ENCODE measurements at regions of chr1 and their contacts with region 1.

Region 1: DNA sequence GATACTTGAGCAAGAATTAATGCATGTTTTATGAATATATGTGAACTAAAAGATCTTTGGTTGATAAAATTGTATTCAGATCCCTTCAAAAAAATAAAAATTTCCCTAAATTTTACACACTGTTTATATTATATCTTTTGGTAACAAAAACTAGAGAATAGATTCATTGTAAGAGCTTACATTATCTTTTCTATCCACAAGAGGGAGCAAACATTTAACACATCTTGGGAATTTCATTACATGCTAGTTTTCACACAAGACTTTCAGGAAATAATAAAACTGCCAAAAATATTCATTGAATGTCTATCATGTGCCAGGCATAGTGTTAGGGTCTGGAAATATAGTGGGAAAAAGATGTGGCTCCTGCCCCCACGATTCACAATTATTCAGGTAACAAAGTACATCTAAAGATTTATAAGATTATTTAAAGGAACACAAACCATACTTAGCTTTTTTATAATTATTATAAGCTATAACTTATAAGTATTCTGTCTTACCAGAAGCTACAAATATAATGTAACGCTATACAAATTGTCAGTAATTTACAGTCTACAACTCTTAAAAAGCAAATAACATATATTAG is 30.6 kb downstream of the FAF1 start:
- DNase-seq: no peak
- H3K4me3 ChIP-seq: no peak overlapping the region
- H3K27ac ChIP-seq: no peak overlapping the region
- H3K4me1 ChIP-seq: peaks cover 0 to 8% (median 5%) of the 10 kb centered on the region in 4 donors
- H3K27me3 ChIP-seq: no peaks in the 10 kb centered on the region
- CTCF ChIP-seq: peak; percentile 57 to 67 (median 59)
- EP300 ChIP-seq: no peak
- POLR2A ChIP-seq: no peak

Region 2: GRCh38 chr1:50774759-50775351 is 154.6 kb before region 1 on chr1:
- intact Hi-C with region 1: loop called (anchors 10 kb)
- DNase-seq: no peak
- H3K4me3 ChIP-seq: no peak overlapping the region
- H3K27ac ChIP-seq: no peak overlapping the region
- H3K4me1 ChIP-seq: no peaks in the 10 kb centered on the region
- H3K27me3 ChIP-seq: no peaks in the 10 kb centered on the region
- CTCF ChIP-seq: peak; percentile 68 to 74 (median 70)
- EP300 ChIP-seq: no peak
- POLR2A ChIP-seq: no peak

Region 3: GRCh38 chr1:51101976-51102375 is 172.5 kb after region 1 on chr1 and contains the start of gene C1orf185:
- intact Hi-C with region 1: no loop called
- DNase-seq: no peak
- H3K4me3 ChIP-seq: no peak within 1 kb of the TSS
- H3K27ac ChIP-seq: no peak within 1 kb of the TSS
- H3K4me1 ChIP-seq: no peaks in the 10 kb centered on the region
- H3K27me3 ChIP-seq: peaks cover 0 to 4% (median 0%) of the 10 kb centered on the region in 4 donors
- CTCF ChIP-seq: no peak
- EP300 ChIP-seq: no peak
- POLR2A ChIP-seq: no peak
- total RNA-seq, gene C1orf185: not detected

Measured in esophagus muscularis mucosa (tissue), 4 donors.